ENCODE measurements at regions of chr1 and their contacts with region 1.

Region 1: GRCh38 chr1:44842862-44843655 is at the start of gene PTCH2:
- DNase-seq: peak; percentile 81 to 85
- H3K4me3 ChIP-seq: peak within 1 kb of the TSS; percentile 45 to 58
- H3K27ac ChIP-seq: peak within 1 kb of the TSS; percentile 70 to 86
- H3K4me1 ChIP-seq: no peaks in the 10 kb centered on the region
- H3K27me3 ChIP-seq: no peaks in the 10 kb centered on the region
- CTCF ChIP-seq: no peak
- POLR2A ChIP-seq: peak; percentile 58 to 60
- total RNA-seq, gene PTCH2: 3.1 to 8.1 (median 5.4) TPM

Region 2: DNA sequence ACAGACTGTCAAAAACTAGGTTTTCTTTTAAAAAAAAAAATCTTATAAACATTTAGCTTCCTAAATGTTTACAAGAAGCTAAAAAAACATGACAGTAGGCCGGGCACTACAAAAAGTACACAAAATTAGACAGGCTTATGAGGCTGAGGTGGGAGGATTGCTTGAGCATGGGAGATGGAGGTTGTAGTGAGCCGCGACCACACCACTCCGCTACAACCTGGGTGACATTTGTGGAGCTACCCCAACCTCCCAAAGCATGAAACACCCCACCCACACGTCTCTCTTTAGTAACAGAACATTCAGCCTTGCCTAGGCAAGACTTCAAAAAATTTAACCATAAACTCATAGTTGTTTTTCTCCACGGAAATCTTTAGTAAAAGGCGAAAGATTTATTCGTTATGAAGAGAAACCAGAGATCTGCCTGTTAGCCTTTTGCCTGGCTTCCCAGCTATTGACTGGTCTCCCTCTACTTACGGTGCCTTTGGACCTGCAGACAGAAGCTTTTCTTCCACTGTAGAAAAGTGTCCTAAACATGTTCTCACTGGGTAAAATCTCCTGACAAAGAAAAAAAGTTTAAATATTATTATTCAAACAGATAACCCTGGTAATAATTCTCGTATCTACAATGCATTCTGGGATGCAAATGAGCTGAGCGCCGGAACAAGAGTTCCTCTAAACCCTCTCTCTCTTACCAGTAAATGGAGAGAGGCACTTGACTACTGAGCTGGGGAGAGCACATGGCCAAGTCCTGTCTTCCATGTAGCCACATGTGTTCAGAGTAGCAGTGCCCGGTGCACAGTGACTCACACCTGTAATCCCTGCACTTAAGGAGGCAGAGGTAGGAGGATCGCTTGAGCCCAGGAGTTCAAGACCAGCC is 121.3 kb before region 1 on chr1:
- intact Hi-C with region 1: loop called (anchors 10 kb)
- DNase-seq: peak; percentile 48 to 65
- H3K4me3 ChIP-seq: no peak overlapping the region
- H3K27ac ChIP-seq: peak overlapping the region; percentile 26 to 67
- H3K4me1 ChIP-seq: no peaks in the 10 kb centered on the region
- H3K27me3 ChIP-seq: no peaks in the 10 kb centered on the region
- CTCF ChIP-seq: no peak
- POLR2A ChIP-seq: peak in 1 of 2 donors; percentile 48